Mammary epithelial cell (primary cell): ENCODE measurements at regions of chr5 and their contacts with region 1.

Region 1: GRCh38 chr5:152523964-152524363 is 118.9 kb upstream of the NMUR2 start:
- DNase-seq: peak; percentile 41
- H3K4me3 ChIP-seq: no peak overlapping the region
- H3K27ac ChIP-seq: no peak overlapping the region
- H3K4me1 ChIP-seq: peaks cover 7% of the 10 kb centered on the region
- H3K27me3 ChIP-seq: no peaks in the 10 kb centered on the region
- CTCF ChIP-seq: no peak

Region 2: GRCh38 chr5:152226191-152226590 is 297.8 kb before region 1 on chr5:
- CTCF ChIA-PET with region 1: no interaction called
- dilution Hi-C with region 1: no loop called
- in situ Hi-C with region 1: no loop called
- intact Hi-C with region 1: no loop called
- DNase-seq: no peak
- H3K4me3 ChIP-seq: no peak overlapping the region
- H3K27ac ChIP-seq: no peak overlapping the region
- H3K4me1 ChIP-seq: no peaks in the 10 kb centered on the region
- H3K27me3 ChIP-seq: no peaks in the 10 kb centered on the region
- CTCF ChIP-seq: no peak

Region 3: DNA sequence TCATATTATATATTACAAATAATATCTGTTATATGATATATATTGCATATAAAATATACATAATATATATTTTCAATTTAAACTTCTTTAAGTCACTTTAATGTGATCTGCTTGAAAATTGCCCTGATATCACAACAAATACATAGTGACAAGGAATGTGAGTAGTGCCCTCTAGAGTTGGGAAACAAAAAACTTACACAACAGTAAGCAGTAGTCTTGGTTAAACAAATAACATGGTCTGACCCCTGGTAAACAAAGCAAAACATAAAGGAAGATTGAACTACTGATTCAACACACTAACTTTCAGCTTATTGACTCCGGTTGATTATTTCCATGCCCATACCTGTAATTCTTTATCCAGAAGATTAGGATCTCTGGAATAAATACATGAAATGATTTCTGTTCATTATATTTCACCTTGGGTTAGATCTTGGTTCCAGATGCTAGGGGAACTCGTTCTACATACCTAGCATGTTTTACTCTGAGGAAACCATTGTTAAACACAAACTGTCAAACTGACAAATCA is 69.5 kb after region 1 on chr5:
- CTCF ChIA-PET with region 1: interaction called, 12 read pairs
- dilution Hi-C with region 1: no loop called
- in situ Hi-C with region 1: no loop called
- intact Hi-C with region 1: no loop called
- DNase-seq: no peak
- H3K4me3 ChIP-seq: no peak overlapping the region
- H3K27ac ChIP-seq: no peak overlapping the region
- H3K4me1 ChIP-seq: no peaks in the 10 kb centered on the region
- H3K27me3 ChIP-seq: no peaks in the 10 kb centered on the region
- CTCF ChIP-seq: peak in 1 of 2 donors; percentile 47

Region 4: GRCh38 chr5:152912924-152913323 is 389.0 kb after region 1 on chr5:
- CTCF ChIA-PET with region 1: no interaction called
- dilution Hi-C with region 1: no loop called
- in situ Hi-C with region 1: no loop called
- intact Hi-C with region 1: no loop called
- DNase-seq: no peak
- H3K4me3 ChIP-seq: no peak overlapping the region
- H3K27ac ChIP-seq: no peak overlapping the region
- H3K4me1 ChIP-seq: no peaks in the 10 kb centered on the region
- H3K27me3 ChIP-seq: no peaks in the 10 kb centered on the region
- CTCF ChIP-seq: no peak